A673 (cell line): ENCODE measurements at regions of chr22 and their contacts with region 1.

Region 1: GRCh38 chr22:23193196-23193827 is 13.0 kb downstream of the BCR start:
- DNase-seq: no peak
- H3K4me3 ChIP-seq: no peak overlapping the region
- H3K27ac ChIP-seq: no peak overlapping the region
- H3K4me1 ChIP-seq: no peaks in the 10 kb centered on the region
- H3K27me3 ChIP-seq: no peaks in the 10 kb centered on the region
- CTCF ChIP-seq: no peak

Region 2: GRCh38 chr22:23128269-23129108 is 64.8 kb before region 1 on chr22:
- CTCF ChIA-PET with region 1: no interaction called
- POLR2A ChIA-PET with region 1: no interaction called
- intact Hi-C with region 1: no loop called
- DNase-seq: peak; percentile 82
- H3K4me3 ChIP-seq: no peak overlapping the region
- H3K27ac ChIP-seq: no peak overlapping the region
- H3K4me1 ChIP-seq: no peaks in the 10 kb centered on the region
- H3K27me3 ChIP-seq: no peaks in the 10 kb centered on the region
- CTCF ChIP-seq: peak; percentile 84

Region 3: GRCh38 chr22:23163665-23164064 is 29.6 kb before region 1 on chr22:
- CTCF ChIA-PET with region 1: no interaction called
- POLR2A ChIA-PET with region 1: interaction called, 10 read pairs
- intact Hi-C with region 1: no loop called
- DNase-seq: no peak
- H3K4me3 ChIP-seq: no peak overlapping the region
- H3K27ac ChIP-seq: no peak overlapping the region
- H3K4me1 ChIP-seq: no peaks in the 10 kb centered on the region
- H3K27me3 ChIP-seq: no peaks in the 10 kb centered on the region
- CTCF ChIP-seq: no peak